ENCODE measurements at regions of chr6 and their contacts with region 1.

Region 1: DNA sequence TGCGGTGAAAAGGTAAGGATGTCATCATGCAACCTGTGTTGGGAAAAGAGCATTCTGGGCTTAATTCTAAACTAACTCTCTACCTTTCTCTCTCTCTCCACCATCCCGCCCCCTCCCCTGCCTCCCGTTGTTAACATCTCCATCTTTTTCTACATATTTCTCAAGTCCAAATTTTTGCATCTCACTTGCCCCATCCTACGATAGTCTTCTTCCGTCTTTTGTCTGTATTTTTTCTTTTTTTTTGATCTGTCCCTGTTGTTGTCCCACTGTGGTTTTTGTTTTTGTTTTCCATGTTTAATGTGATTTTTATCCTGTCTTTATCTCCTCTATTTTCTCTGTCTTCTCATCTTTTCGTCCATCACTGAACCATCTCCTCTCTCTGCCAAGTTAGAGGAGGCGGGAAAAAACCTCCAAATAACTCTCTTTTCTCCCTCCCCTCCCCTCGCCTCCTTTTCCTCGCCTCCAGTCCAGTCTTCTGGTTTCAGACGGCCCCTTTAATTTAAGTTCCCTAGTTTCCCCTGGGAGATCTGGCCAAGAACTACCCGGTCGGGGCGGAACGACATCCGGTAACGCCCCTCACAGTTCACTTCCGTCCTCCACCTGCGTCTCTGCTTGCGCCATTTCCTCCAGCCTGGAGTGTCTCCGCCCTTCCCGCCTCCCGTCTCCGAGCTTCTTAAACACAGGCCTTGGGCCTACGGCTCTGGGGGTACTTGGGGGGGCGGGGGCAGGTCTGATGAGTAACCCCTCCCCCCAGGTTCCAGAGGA is at the start of gene NFKBIL1:
- DNase-seq: peak; percentile 69 to 95 (median 86)
- ATAC-seq: peak; percentile 85 to 90 (median 88)
- H3K4me3 ChIP-seq: peak within 1 kb of the TSS; percentile 46 to 49
- H3K4me3 Mint-ChIP-seq: peak within 1 kb of the TSS; percentile 84 to 88 (median 88)
- H3K27ac ChIP-seq: peak within 1 kb of the TSS; percentile 82
- H3K27ac Mint-ChIP-seq: peak within 1 kb of the TSS; percentile 88 to 92
- H3K4me1 ChIP-seq: peaks cover 13 to 44% of the 10 kb centered on the region in 2 experiments
- H3K4me1 Mint-ChIP-seq: peaks cover 39 to 45% (median 41%) of the 10 kb centered on the region in 3 donors
- H3K27me3 ChIP-seq: no peaks in the 10 kb centered on the region
- H3K27me3 Mint-ChIP-seq: no peaks in the 10 kb centered on the region
- total RNA-seq, gene NFKBIL1: 6.9 to 17.1 (median 11.6) TPM

Region 2: GRCh38 chr6:31493875-31494694 is 53.1 kb before region 1 on chr6:
- CTCF ChIA-PET with region 1: interaction called in 1 of 2 experiments, 30 read pairs
- POLR2A ChIA-PET with region 1: no interaction called
- DNase-seq: peak; percentile 15 to 90 (median 68)
- ATAC-seq: peak; percentile 43 to 54 (median 52)
- H3K4me3 ChIP-seq: peak overlapping the region; percentile 66 to 94
- H3K4me3 Mint-ChIP-seq: peak overlapping the region; percentile 77 to 93 (median 83)
- H3K27ac ChIP-seq: peak overlapping the region; percentile 74
- H3K27ac Mint-ChIP-seq: peak overlapping the region; percentile 76 to 89
- H3K4me1 ChIP-seq: peaks cover 13 to 67% of the 10 kb centered on the region in 2 experiments
- H3K4me1 Mint-ChIP-seq: peaks cover 54 to 60% (median 55%) of the 10 kb centered on the region in 3 donors
- H3K27me3 ChIP-seq: no peaks in the 10 kb centered on the region
- H3K27me3 Mint-ChIP-seq: no peaks in the 10 kb centered on the region

Region 3: GRCh38 chr6:31513456-31514165 is 33.5 kb before region 1 on chr6:
- CTCF ChIA-PET with region 1: no interaction called
- POLR2A ChIA-PET with region 1: no interaction called
- DNase-seq: no peak
- ATAC-seq: no peak
- H3K4me3 ChIP-seq: no peak overlapping the region
- H3K4me3 Mint-ChIP-seq: no peak overlapping the region
- H3K27ac ChIP-seq: no peak overlapping the region
- H3K27ac Mint-ChIP-seq: no peak overlapping the region
- H3K4me1 ChIP-seq: no peaks in the 10 kb centered on the region
- H3K4me1 Mint-ChIP-seq: no peaks in the 10 kb centered on the region
- H3K27me3 ChIP-seq: peaks cover 0 to 10% of the 10 kb centered on the region in 2 experiments
- H3K27me3 Mint-ChIP-seq: no peaks in the 10 kb centered on the region

Region 4: DNA sequence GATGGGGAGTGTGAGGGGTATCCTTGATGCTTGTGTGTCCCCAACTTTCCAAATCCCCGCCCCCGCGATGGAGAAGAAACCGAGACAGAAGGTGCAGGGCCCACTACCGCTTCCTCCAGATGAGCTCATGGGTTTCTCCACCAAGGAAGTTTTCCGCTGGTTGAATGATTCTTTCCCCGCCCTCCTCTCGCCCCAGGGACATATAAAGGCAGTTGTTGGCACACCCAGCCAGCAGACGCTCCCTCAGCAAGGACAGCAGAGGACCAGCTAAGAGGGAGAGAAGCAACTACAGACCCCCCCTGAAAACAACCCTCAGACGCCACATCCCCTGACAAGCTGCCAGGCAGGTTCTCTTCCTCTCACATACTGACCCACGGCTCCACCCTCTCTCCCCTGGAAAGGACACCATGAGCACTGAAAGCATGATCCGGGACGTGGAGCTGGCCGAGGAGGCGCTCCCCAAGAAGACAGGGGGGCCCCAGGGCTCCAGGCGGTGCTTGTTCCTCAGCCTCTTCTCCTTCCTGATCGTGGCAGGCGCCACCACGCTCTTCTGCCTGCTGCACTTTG is 28.3 kb after region 1 on chr6 and contains the start of gene TNF:
- CTCF ChIA-PET with region 1: interaction called, 3 to 26 read pairs
- POLR2A ChIA-PET with region 1: interaction called, 3 to 8 read pairs
- DNase-seq: peak in 26 of 35 experiments; percentile 32 to 81 (median 52)
- ATAC-seq: peak; percentile 5 to 8 (median 6)
- H3K4me3 ChIP-seq: peak within 1 kb of the TSS; percentile 79 to 87
- H3K4me3 Mint-ChIP-seq: peak within 1 kb of the TSS; percentile 86 to 99 (median 91)
- H3K27ac ChIP-seq: peak within 1 kb of the TSS; percentile 92
- H3K27ac Mint-ChIP-seq: peak within 1 kb of the TSS; percentile 98 to 100
- H3K4me1 ChIP-seq: peaks cover 45 to 93% of the 10 kb centered on the region in 2 experiments
- H3K4me1 Mint-ChIP-seq: peaks cover 90 to 95% (median 94%) of the 10 kb centered on the region in 3 donors
- H3K27me3 ChIP-seq: no peaks in the 10 kb centered on the region
- H3K27me3 Mint-ChIP-seq: no peaks in the 10 kb centered on the region
- total RNA-seq, gene TNF: 13.8 to 28.0 (median 25.0) TPM

Region 5: GRCh38 chr6:31580807-31581433 is 33.8 kb after region 1 on chr6:
- CTCF ChIA-PET with region 1: interaction called, 3 to 31 read pairs
- POLR2A ChIA-PET with region 1: interaction called, 8 to 11 read pairs
- DNase-seq: peak; percentile 69 to 93 (median 85)
- ATAC-seq: peak; percentile 65 to 70 (median 68)
- H3K4me3 ChIP-seq: peak overlapping the region; percentile 86 to 99
- H3K4me3 Mint-ChIP-seq: peak overlapping the region; percentile 97 to 100 (median 99)
- H3K27ac ChIP-seq: peak overlapping the region; percentile 92
- H3K27ac Mint-ChIP-seq: peak overlapping the region; percentile 94 to 98
- H3K4me1 ChIP-seq: peaks cover 39 to 86% of the 10 kb centered on the region in 2 experiments
- H3K4me1 Mint-ChIP-seq: peaks cover 75 to 83% (median 81%) of the 10 kb centered on the region in 3 donors
- H3K27me3 ChIP-seq: no peaks in the 10 kb centered on the region
- H3K27me3 Mint-ChIP-seq: no peaks in the 10 kb centered on the region